OCI-LY7 (cell line): ENCODE measurements at regions of chr20 and their contacts with region 1.

Region 1: DNA sequence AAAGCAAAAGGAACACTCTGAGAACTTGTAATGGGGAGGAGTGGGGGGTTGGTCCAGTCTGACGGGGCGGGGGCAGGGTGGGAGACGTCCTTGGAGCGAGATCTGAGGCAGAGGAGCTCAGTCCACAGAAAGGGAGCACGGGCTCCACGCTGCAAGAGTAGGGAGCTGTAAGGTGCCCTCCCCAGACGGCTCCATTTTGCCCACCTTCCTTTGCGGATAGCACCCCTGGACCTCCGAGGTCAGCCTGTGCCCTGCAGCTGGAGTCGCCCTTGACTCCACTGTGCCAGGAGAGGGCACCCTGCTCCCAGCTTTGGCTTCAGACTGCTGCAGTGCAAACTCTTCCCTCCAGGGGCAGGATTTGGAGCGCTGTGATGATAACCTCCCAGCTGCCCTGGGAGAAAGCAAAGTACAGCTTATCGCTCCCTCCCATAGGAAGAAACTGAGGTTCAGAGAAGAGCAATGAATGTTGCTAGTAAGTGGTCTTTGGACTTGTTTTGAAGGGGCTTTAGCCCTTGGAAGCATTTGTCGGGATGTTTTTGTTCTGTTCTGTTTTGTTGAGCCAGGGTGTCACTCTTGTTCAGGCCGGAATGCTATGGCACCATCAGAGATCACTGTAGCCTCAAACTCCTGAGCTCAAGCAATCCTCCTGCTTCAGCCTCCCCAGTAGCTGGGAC is 9.5 kb upstream of the AHCY start:
- DNase-seq: peak; percentile 93
- H3K4me3 ChIP-seq: no peak overlapping the region
- H3K27ac ChIP-seq: no peak overlapping the region
- H3K4me1 ChIP-seq: no peaks in the 10 kb centered on the region
- CTCF ChIP-seq: peak; percentile 100

Region 2: DNA sequence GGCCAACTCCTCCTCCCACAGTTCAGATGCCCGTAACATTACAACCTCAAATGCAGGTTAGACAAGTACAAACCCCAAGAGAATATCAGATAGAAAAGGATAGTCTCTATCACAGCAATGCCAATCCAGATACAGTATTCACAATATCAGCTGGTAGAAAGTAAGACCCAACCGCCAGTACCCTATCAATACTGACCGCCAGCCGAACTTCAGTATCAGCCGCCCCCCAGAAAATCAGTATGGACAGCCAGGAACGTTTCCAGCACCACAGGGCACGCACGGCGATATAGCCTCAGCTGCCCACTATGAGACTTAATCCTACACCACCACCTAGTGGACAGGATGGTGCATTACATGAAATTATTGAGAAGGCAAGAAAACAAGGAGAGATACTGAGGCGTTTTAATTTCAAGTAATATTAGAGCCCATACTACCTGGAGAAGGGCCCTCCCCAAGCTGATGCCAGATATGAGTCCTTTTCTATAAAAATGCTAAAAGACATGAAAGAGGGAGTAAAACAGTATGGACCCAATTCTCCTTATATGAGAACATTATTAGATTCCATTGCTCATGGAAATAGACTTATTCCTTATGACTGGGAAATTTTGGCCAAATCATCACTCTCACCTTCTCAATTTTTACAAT is 183.0 kb before region 1 on chr20:
- CTCF ChIA-PET with region 1: no interaction called
- POLR2A ChIA-PET with region 1: no interaction called
- intact Hi-C with region 1: no loop called
- DNase-seq: peak; percentile 84
- H3K4me3 ChIP-seq: peak overlapping the region; percentile 54
- H3K27ac ChIP-seq: no peak overlapping the region
- H3K4me1 ChIP-seq: peaks cover 13% of the 10 kb centered on the region
- CTCF ChIP-seq: peak; percentile 96

Region 3: GRCh38 chr20:34190679-34191090 is 122.0 kb before region 1 on chr20:
- CTCF ChIA-PET with region 1: interaction called, 3 read pairs
- POLR2A ChIA-PET with region 1: no interaction called
- intact Hi-C with region 1: loop called (anchors 1 kb)
- DNase-seq: peak; percentile 76
- H3K4me3 ChIP-seq: no peak overlapping the region
- H3K27ac ChIP-seq: no peak overlapping the region
- H3K4me1 ChIP-seq: peaks cover 6% of the 10 kb centered on the region
- CTCF ChIP-seq: peak; percentile 98

Region 4: GRCh38 chr20:34473262-34473883 is 160.7 kb after region 1 on chr20:
- CTCF ChIA-PET with region 1: no interaction called
- POLR2A ChIA-PET with region 1: interaction called, 3 read pairs
- intact Hi-C with region 1: loop called (anchors 1 kb)
- DNase-seq: peak; percentile 65
- H3K4me3 ChIP-seq: no peak overlapping the region
- H3K27ac ChIP-seq: no peak overlapping the region
- H3K4me1 ChIP-seq: no peaks in the 10 kb centered on the region
- CTCF ChIP-seq: peak; percentile 83

Region 5: DNA sequence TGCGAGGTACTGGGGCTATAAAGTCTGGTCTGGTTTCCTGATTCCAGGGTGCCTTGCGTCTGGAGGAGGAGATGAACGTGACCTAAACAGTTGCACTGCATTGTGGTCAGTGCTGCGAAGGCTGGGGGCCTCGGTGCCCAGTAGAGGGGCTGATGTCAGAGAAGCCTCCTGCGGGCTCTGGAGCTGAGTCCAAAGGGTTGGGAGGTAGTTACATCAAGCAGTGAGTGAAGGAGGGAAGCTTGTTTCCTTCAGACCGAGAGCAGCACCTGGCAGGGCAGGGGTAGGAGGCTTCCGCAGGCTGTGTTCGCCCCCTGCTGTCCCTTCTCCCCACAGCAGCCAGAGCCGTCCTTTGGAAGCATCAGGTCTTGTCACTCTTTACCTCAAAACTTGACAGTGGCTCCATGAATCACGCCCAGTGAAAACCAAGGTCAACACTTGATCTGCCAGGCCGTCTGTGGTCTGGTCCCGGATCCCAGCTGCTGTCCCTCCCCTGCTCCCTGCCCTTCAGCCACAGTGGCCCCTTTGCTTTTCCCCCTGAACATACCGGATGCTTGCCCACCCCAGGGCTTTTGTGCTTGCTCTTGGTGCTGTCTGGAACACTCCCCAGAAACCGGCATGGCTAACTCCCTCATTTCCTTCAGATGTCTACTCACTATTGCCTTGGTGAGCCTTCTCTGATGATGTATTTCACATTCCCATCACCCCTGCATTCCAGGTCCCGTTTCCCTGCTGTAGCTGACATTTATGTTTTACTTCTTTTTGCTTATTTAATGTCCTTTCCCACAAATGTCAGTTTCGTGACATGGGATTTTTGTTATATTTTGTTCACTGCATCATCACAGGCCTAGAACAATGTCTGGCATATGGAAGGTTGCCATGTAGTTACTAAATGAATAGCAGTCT is 210.5 kb after region 1 on chr20:
- CTCF ChIA-PET with region 1: interaction called, 16 read pairs
- POLR2A ChIA-PET with region 1: interaction called, 7 read pairs
- intact Hi-C with region 1: loop called (anchors 1 kb)
- DNase-seq: peak; percentile 79
- H3K4me3 ChIP-seq: no peak overlapping the region
- H3K27ac ChIP-seq: no peak overlapping the region
- H3K4me1 ChIP-seq: peaks cover 16% of the 10 kb centered on the region
- CTCF ChIP-seq: peak; percentile 85

Region 6: GRCh38 chr20:34768096-34768495 is 455.4 kb after region 1 on chr20:
- CTCF ChIA-PET with region 1: no interaction called
- POLR2A ChIA-PET with region 1: no interaction called
- intact Hi-C with region 1: loop called (anchors 2 kb)
- DNase-seq: no peak
- H3K4me3 ChIP-seq: no peak overlapping the region
- H3K27ac ChIP-seq: no peak overlapping the region
- H3K4me1 ChIP-seq: no peaks in the 10 kb centered on the region
- CTCF ChIP-seq: no peak